Posterior cingulate gyrus (tissue), 11 donors: ENCODE measurements at regions of chr5 and their contacts with region 1.

Region 1: GRCh38 chr5:133111299-133111698 is 59.5 kb downstream of the HSPA4 start:
- DNase-seq: peak; percentile 70 to 98 (median 86)

Region 2: GRCh38 chr5:133247881-133248624 is 136.8 kb after region 1 on chr5:
- intact Hi-C with region 1: loop called (anchors 5 kb)
- DNase-seq: peak in 4 of 10 donors; percentile 25 to 66 (median 48)

Region 3: GRCh38 chr5:133287500-133287899 is 176.2 kb after region 1 on chr5:
- intact Hi-C with region 1: loop called (anchors 1 kb)
- DNase-seq: peak in 6 of 10 donors; percentile 27 to 80 (median 40)

Region 4: DNA sequence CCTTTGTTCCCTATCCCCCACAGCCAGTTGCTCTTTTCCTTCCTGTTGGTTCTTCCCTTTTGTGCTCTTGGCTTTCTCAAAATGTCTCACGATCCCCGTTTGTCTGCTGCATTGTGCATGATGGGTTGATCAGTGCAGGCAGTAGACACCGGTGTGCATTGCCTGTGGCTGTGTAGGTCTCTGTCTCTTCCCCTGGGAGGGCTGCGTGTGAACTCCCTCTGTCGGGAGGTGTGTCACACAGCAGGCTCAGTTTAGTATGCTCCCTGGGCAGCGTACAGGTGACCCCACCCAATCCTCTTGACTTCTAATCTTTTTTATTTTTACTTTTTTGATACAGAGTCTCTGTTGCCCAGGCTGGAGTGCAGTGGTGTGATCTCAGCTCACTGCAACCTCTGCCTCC is 235.7 kb after region 1 on chr5:
- intact Hi-C with region 1: no loop called
- DNase-seq: peak in 1 of 10 donors; percentile 61

Region 5: GRCh38 chr5:133944263-133945185 is 833.2 kb after region 1 on chr5:
- intact Hi-C with region 1: loop called (anchors 10 kb)
- DNase-seq: peak in 7 of 10 donors; percentile 42 to 90 (median 56)